Activated T-helper 1 cell treated with anti-CD3 and anti-CD28 coated beads, Interleukin-12 subunit alpha, Interleukin-12 subunit beta, Interleukin-2, Interleukin-4 antibody, amounts not matched to agents 30 ng/mL and 10 ng/mL and 1 ng/mL, durations not matched to agents 14 hours and 24 hours and 36 hours (primary cell): ENCODE measurements at regions of chr6 and their contacts with region 1.

Region 1: DNA sequence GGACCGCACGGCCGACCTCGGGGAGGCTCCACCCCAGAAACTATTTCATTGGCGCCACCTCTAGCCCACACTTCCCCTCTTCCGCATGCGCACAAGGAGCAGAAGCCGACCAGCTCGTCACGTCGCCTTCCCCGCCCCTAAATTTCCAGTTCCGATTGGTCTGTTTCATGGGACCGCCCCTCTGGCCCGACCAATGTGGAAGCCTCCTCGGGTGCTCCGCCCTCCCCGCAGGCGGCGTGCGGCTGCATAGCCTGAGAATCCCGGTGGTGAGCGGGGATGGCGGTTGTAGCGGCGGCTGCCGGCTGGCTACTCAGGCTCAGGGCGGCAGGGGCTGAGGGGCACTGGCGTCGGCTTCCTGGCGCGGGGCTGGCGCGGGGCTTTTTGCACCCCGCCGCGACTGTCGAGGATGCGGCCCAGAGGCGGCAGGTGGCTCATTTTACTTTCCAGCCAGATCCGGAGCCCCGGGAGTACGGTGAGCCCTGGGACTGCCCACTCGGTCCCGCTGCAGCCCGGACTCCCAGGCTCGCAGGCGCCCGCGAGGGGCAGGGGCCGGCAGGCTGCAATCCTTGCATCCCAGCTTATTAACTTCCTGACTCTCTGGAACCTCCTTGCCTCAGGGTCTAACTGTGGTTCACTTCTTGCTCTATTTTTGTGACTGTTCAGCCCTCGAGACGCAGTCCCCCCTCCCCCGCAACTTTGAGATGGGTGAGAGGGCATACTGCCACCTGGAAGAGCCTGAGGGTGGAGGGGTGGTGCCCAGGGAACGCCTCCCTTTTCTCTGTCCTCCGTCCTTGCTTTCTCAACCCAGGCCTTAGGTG is at the start of gene BCKDHB:
- DNase-seq: peak; percentile 98
- H3K4me3 Mint-ChIP-seq: peak within 1 kb of the TSS; percentile 96
- H3K27ac Mint-ChIP-seq: peak within 1 kb of the TSS; percentile 90
- H3K4me1 Mint-ChIP-seq: peaks cover 31% of the 10 kb centered on the region
- H3K27me3 Mint-ChIP-seq: peaks cover 2% of the 10 kb centered on the region
- total RNA-seq, gene BCKDHB: 13.3 and 14.4 TPM in 2 replicates

Region 2: GRCh38 chr6:79536954-79537747 is 569.5 kb before region 1 on chr6 and contains the start of gene LCA5:
- intact Hi-C with region 1: loop called (anchors 5 kb)
- DNase-seq: peak; percentile 81
- H3K4me3 Mint-ChIP-seq: no peak within 1 kb of the TSS
- H3K27ac Mint-ChIP-seq: no peak within 1 kb of the TSS
- H3K4me1 Mint-ChIP-seq: no peaks in the 10 kb centered on the region
- H3K27me3 Mint-ChIP-seq: peaks cover 17% of the 10 kb centered on the region
- total RNA-seq, gene LCA5: 0.08 and 0.17 TPM in 2 replicates